ENCODE measurements at regions of chr1 and their contacts with region 1.

Region 1: GRCh38 chr1:26321315-26322041 is 3.7 kb downstream of the CD52 start:
- DNase-seq: peak; percentile 88
- H3K4me3 Mint-ChIP-seq: peak overlapping the region; percentile 85
- H3K27ac Mint-ChIP-seq: peak overlapping the region; percentile 94
- H3K4me1 Mint-ChIP-seq: peaks cover 55% of the 10 kb centered on the region
- H3K27me3 Mint-ChIP-seq: no peaks in the 10 kb centered on the region

Region 2: DNA sequence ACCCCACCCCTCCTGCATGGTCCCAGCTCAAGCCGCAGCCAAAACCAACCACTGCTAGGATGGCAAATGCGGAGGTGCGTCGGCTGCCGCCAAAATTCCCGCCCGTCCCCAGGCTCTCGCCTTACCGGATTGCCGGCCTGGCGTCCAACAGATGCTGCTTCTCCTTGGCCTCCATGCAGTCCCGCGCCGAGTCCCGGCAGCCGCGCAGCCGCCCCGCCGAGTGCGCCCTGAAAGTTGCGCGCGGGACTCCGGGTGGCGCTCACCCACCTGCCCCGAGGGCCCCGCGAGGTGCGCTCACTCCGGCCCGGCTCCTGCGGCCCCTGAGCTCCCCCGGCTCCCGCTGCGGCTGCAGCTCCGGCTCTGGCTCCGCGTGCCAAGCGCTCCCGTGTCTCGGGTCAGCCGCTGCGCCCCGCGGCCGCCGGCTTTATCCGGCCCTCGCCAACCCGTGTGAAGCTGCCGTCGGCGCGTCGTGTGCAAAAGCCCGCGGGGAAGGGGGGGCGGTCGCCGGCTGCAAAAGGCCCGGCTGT is 275.7 kb before region 1 on chr1 and contains the start of gene SLC30A2:
- intact Hi-C with region 1: no loop called
- DNase-seq: no peak
- H3K4me3 Mint-ChIP-seq: no peak within 1 kb of the TSS
- H3K27ac Mint-ChIP-seq: peak within 1 kb of the TSS; percentile 58
- H3K4me1 Mint-ChIP-seq: no peaks in the 10 kb centered on the region
- H3K27me3 Mint-ChIP-seq: peaks cover 62% of the 10 kb centered on the region
- total RNA-seq, gene SLC30A2: not detected in 2 replicates

Region 3: DNA sequence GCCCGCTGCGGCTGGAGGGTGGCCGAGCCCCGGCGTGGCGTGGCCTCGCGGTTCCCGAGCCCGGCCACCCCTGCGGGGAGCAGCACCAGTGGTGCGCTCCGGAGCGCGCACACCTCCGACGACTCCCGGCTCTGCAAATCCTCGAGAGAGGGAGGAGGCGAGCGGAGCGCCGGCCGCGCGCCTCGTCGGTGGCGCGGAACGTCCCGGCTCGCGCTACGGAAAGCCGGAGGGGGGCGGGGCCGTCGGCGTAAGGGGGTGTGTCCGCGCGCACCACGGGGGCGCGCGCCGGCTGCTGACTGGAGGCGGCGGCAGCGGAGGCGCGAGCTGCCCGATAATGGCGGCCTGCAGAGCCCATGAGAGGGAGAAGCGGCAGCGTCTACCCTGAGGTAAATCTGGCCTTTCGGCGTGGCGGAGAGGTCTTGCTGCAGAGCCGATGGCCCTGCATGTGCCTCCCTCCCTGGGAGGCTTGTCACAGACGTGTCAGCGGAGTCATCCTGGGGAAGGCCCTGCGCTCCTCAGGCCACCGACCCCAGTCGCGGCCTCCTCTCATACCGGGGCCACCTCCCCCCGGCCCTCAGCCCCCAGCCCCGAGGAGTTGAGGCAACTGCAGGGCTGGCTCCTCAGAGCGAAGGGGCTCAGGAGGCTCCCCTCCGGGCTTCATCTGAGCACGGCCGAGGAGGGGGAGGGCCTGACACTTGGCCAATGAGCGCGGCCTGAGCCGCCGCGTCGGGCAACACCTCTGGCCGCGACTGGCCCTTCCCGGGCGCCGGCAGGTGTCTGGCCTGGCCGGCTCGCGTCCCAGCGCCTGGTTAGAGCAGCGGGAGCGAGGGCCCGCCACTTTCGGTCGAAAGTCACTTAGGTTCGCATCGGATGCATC is 209.7 kb before region 1 on chr1 and contains the start of gene PDIK1L:
- intact Hi-C with region 1: loop called (anchors 1 kb)
- DNase-seq: peak; percentile 91
- H3K4me3 Mint-ChIP-seq: peak within 1 kb of the TSS; percentile 96
- H3K27ac Mint-ChIP-seq: peak within 1 kb of the TSS; percentile 92
- H3K4me1 Mint-ChIP-seq: peaks cover 36% of the 10 kb centered on the region
- H3K27me3 Mint-ChIP-seq: no peaks in the 10 kb centered on the region
- total RNA-seq, gene PDIK1L: 15.5 and 18.9 TPM in 2 replicates

Region 4: GRCh38 chr1:26169669-26170471 is 151.6 kb before region 1 on chr1 and contains the start of gene ZNF593:
- intact Hi-C with region 1: loop called (anchors 1 kb)
- DNase-seq: peak; percentile 85
- H3K4me3 Mint-ChIP-seq: peak within 1 kb of the TSS; percentile 92
- H3K27ac Mint-ChIP-seq: peak within 1 kb of the TSS; percentile 88
- H3K4me1 Mint-ChIP-seq: peaks cover 29% of the 10 kb centered on the region
- H3K27me3 Mint-ChIP-seq: peaks cover 17% of the 10 kb centered on the region
- total RNA-seq, gene ZNF593: 81.3 and 83.0 TPM in 2 replicates

Region 5: GRCh38 chr1:26284597-26285360 is 36.7 kb before region 1 on chr1:
- intact Hi-C with region 1: loop called (anchors 1 kb)
- DNase-seq: peak; percentile 88
- H3K4me3 Mint-ChIP-seq: peak overlapping the region; percentile 81
- H3K27ac Mint-ChIP-seq: peak overlapping the region; percentile 97
- H3K4me1 Mint-ChIP-seq: peaks cover 70% of the 10 kb centered on the region
- H3K27me3 Mint-ChIP-seq: no peaks in the 10 kb centered on the region

Region 6: DNA sequence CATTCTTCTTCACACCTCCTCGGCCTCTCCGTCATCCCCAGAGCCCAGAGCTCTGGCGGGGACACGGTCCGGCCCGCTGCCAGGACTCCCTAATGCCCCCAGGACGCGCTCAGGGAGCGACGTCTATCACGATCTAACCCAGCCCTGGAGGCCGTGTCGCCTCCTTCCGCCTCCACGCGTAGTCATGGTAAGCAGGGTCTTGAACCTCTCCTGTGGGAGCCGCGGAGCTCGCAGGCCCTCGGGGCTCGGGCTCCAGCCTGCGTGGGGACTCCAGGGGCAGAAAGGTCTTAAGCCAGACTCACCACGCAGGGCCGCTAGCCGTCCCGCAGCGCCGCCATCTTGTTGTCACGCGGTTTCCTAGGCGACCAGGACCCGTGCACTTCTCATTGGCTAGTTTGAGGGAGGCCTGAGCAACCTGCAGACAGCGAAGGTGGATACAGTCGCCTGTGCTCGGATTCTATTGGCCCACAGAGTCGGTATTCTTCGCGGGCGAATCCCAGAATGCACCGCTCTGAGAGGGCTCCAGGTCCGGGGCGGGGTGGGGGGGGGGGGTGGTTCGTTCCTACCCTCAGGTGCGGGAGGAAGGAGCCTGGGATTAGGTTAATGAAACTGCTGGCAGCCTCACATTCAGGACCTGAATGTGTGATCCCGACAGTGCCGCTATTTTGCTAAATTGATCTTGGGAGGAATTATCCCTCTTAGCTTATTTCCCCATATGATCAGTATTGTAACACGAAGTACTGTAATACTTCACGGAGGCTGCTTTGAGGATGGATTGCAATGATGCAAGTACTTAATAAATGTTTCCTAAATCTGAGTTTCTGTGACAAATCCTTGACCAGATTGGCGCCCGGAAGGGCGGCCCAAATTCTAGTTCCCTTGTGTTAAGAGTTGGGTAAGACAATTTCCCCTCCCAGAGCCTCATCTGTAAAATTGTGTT is 14.9 kb before region 1 on chr1 and contains the start of gene UBXN11:
- intact Hi-C with region 1: loop called (anchors 1 kb)
- DNase-seq: peak; percentile 92
- H3K4me3 Mint-ChIP-seq: peak within 1 kb of the TSS; percentile 99
- H3K27ac Mint-ChIP-seq: peak within 1 kb of the TSS; percentile 95
- H3K4me1 Mint-ChIP-seq: peaks cover 41% of the 10 kb centered on the region
- H3K27me3 Mint-ChIP-seq: no peaks in the 10 kb centered on the region
- total RNA-seq, gene UBXN11: 14.8 and 22.1 TPM in 2 replicates

Measured in activated T-helper 1 cell treated with anti-CD3 and anti-CD28 coated beads, Interleukin-12 subunit alpha, Interleukin-12 subunit beta, Interleukin-2, Interleukin-4 antibody, amounts not matched to agents 30 ng/mL and 10 ng/mL and 1 ng/mL, durations not matched to agents 14 hours and 24 hours and 36 hours (primary cell).